ENCODE measurements at regions of chr15 and their contacts with region 1.

Region 1: GRCh38 chr15:67168694-67169093 is 85.8 kb downstream of the AAGAB start:
- DNase-seq: no peak
- H3K4me3 ChIP-seq: no peak overlapping the region
- H3K27me3 ChIP-seq: no peaks in the 10 kb centered on the region
- CTCF ChIP-seq: no peak

Region 2: GRCh38 chr15:66955871-66956585 is 212.7 kb before region 1 on chr15:
- CTCF ChIA-PET with region 1: no interaction called
- POLR2A ChIA-PET with region 1: interaction called, 15 read pairs
- DNase-seq: no peak
- H3K4me3 ChIP-seq: no peak overlapping the region
- H3K27me3 ChIP-seq: peaks cover 4% of the 10 kb centered on the region
- CTCF ChIP-seq: no peak

Region 3: GRCh38 chr15:67059127-67059553 is 109.6 kb before region 1 on chr15:
- CTCF ChIA-PET with region 1: no interaction called
- POLR2A ChIA-PET with region 1: no interaction called
- DNase-seq: no peak
- H3K4me3 ChIP-seq: no peak overlapping the region
- H3K27me3 ChIP-seq: no peaks in the 10 kb centered on the region
- CTCF ChIP-seq: no peak

Region 4: DNA sequence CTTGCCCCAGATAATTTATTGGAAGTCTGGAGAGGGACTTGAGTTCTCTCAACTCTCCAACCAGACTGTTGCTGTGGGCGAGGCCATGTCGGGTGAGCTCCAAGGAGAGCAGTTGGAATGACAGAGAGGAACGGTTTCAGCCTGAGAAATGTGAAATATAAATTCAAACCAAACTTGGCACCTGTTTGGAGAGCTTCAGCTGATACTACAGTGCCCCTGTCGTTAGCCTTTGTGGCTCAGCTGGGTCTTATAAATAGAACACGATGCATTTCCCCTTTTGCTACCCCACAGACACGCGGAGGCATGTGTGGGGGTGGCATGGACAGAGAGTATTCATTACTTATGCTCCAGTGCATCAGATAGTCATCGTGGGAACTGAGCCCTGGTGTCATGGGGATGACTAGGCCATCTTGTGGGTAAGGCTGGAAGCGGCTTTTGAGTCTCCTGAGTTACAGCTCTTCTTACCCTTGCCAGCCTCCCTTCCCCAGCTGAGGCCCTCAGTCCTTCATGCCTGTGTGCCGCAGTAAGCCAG is 87.7 kb before region 1 on chr15:
- CTCF ChIA-PET with region 1: no interaction called
- POLR2A ChIA-PET with region 1: no interaction called
- DNase-seq: peak; percentile 55
- H3K4me3 ChIP-seq: no peak overlapping the region
- H3K27me3 ChIP-seq: no peaks in the 10 kb centered on the region
- CTCF ChIP-seq: peak; percentile 51; the same call in 1 of the 2 replicates